AG04449 (cell line): ENCODE measurements at regions of chr11 and their contacts with region 1.

Region 1: DNA sequence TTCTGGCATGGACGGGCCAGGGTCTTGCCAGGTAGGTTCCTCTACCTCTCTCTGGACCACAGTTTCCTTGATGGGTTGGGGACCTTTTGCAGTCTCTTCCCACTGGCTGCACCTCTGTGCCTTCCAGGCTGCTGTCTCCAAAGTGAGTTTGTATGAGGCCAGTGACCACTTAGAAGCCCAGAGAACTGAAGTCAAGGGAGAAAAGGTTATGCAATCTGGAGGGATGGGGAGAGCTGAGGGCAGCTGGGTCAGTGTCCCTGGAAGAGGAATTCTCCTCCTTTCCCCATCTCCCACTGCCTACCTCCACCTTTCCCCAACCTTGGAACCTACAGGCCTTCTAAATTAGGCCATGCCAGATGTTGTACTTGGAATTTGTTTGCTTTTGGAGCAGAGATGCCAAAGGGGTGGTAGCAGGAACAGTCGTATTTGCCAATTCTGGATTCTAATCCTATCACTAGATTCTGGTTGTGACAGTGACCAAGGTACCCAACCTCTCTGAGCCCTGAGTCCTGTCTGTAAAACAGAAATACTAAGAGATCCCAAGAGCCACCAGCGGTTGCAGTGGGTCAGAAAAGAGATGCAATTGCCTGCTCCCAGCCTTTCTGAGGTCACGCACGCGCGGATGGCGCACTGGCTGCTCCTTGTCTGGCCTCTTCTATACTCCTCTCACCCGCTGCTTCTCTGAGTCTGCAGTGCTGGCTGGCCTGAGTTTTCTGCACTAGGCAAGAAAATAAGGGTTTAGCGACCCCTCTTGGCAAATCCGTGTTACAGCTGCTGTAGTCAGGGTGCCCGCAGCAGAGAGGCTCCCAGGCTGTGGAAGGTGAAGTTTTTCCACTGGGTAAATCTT is 10.7 kb upstream of the ACCSL start:
- DNase-seq: peak; percentile 41
- H3K4me3 ChIP-seq: no peak overlapping the region
- CTCF ChIP-seq: peak; percentile 83

Region 2: DNA sequence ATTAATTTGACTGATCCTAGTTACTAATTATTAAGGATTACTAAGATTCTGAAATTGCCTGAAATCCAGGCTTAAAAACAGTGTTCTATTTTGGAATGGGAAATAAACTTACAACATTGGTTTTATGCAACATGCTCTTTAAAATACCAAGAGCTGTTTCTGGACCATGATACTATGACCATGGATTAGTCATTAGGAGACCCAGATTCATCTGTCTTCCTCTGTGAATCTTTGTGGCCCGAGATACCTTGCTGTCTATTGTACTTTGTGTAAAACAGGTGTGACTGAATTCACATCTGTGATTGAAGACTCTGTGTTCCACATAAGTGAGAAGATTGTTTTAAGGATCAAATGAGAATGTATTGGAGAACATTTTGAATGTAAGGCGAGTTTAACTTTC is 257.7 kb before region 1 on chr11:
- CTCF ChIA-PET with region 1: no interaction called
- POLR2A ChIA-PET with region 1: no interaction called
- DNase-seq: no peak
- H3K4me3 ChIP-seq: no peak overlapping the region
- CTCF ChIP-seq: no peak

Region 3: DNA sequence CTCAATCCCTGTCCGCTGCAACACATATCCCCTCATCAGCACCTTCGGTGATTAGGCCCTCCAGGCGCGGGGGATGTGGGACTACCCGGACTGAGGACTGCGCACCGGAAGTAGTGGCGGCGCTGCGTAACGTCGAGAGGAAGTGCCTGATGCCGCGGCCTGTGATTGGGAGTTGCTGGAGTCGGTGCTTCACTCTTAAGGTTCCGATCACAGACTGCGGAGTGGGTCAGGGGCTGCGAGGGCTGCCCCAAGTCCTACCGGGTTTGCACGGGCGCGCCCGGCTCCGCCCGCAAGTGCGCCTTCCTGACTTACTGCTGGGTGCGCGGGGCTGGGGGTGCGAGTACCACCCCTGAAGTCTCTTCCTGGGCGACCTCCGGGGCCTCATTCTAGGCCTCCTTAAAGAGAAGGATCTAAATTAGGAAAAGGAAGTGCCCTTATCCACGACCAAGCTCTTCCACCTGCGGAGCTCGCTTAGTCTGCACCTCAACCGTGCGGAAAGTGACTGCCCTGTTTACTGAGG is 156.3 kb before region 1 on chr11 and contains the start of gene ALKBH3:
- CTCF ChIA-PET with region 1: interaction called, 14 read pairs
- POLR2A ChIA-PET with region 1: no interaction called
- DNase-seq: peak; percentile 61
- H3K4me3 ChIP-seq: peak within 1 kb of the TSS; percentile 88
- CTCF ChIP-seq: no peak

Region 4: DNA sequence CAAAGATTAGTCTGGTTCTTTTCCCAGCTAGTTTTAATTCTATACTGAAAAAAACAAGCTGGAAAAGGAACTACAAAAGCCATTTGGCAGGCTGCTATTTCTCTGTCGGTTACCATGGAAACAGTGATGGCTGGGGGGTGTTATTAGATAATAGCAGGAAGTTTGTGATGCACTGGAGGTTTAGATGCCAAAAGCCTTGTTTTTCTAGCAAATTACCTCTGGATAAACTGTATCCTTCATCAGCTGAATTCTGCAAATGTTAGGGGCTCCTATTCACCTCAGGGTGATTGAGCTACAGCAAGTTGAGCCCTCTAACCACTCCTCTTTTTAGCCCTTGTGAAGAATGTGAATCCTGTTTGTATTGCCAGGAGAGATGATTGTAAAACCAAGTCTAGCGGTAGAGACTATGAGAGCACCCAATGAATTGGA is 131.2 kb before region 1 on chr11:
- CTCF ChIA-PET with region 1: interaction called, 444 read pairs
- POLR2A ChIA-PET with region 1: no interaction called
- DNase-seq: no peak
- H3K4me3 ChIP-seq: no peak overlapping the region
- CTCF ChIP-seq: no peak

Region 5: GRCh38 chr11:43937434-43938411 is 99.3 kb before region 1 on chr11:
- CTCF ChIA-PET with region 1: interaction called, 81 read pairs
- POLR2A ChIA-PET with region 1: interaction called, 15 read pairs
- DNase-seq: peak; percentile 59
- H3K4me3 ChIP-seq: no peak overlapping the region
- CTCF ChIP-seq: no peak

Region 6: GRCh38 chr11:44057340-44057739 is 20.3 kb after region 1 on chr11:
- CTCF ChIA-PET with region 1: interaction called, 15 read pairs
- POLR2A ChIA-PET with region 1: no interaction called
- DNase-seq: no peak
- H3K4me3 ChIP-seq: no peak overlapping the region
- CTCF ChIP-seq: no peak